B cell (primary cell): ENCODE measurements at regions of chr5 and their contacts with region 1.

Region 1: DNA sequence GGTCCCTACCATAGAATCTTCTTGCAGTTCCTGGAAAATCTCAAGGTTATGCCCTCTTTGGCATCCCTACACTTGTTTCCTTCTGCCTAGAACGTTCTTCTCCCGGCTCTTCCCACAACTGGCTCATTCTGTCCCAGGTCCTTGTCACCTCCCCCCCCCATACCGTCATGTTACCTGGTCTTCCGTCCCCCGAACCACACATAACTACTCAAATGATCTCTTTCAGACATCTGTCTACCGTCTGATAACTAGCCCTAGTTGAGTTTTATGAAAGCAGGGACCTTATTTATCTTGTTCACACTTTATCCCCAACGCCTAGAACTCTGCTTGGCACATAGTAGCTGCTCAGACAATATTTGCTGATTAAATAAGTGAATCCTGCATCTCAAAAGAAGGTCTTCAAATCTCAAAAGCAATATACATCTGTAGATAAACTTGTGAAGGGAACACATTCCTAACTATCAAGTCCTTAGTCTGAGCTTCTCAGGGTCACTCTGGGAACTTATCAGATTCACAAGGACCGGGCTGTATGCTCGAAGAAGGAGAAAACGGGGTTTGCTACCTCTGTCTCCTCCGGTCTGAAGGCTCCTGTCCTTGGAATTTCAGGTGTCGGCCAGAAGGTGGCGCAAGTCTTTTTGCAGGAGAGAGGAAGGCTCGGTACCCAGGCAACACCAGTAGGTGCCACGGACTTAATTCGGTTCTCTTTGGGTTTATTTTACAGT is 30.0 kb downstream of the LCP2 start:
- DNase-seq: peak; percentile 85
- ATAC-seq: peak; percentile 95
- H3K4me3 ChIP-seq: no peak overlapping the region
- H3K4me3 Mint-ChIP-seq: peak overlapping the region; percentile 19
- H3K27ac ChIP-seq: no peak overlapping the region
- H3K27ac Mint-ChIP-seq: no peak overlapping the region
- H3K4me1 ChIP-seq: peaks cover 13 to 17% of the 10 kb centered on the region in 2 donors
- H3K4me1 Mint-ChIP-seq: peaks cover 19% of the 10 kb centered on the region
- H3K27me3 ChIP-seq: peaks cover 0 to 5% (median 0%) of the 10 kb centered on the region in 4 experiments
- H3K27me3 Mint-ChIP-seq: peaks cover 13% of the 10 kb centered on the region
- CTCF ChIP-seq: peak; percentile 90

Region 2: GRCh38 chr5:170100066-170100943 is 167.3 kb before region 1 on chr5:
- CTCF ChIA-PET with region 1: no interaction called
- POLR2A ChIA-PET with region 1: no interaction called
- intact Hi-C with region 1: loop called (anchors 5 kb)
- DNase-seq: peak; percentile 66
- ATAC-seq: no peak
- H3K4me3 ChIP-seq: no peak overlapping the region
- H3K4me3 Mint-ChIP-seq: no peak overlapping the region
- H3K27ac ChIP-seq: no peak overlapping the region
- H3K27ac Mint-ChIP-seq: no peak overlapping the region
- H3K4me1 ChIP-seq: no peaks in the 10 kb centered on the region
- H3K4me1 Mint-ChIP-seq: no peaks in the 10 kb centered on the region
- H3K27me3 ChIP-seq: peaks cover 0 to 2% (median 0%) of the 10 kb centered on the region in 4 experiments
- H3K27me3 Mint-ChIP-seq: peaks cover 13% of the 10 kb centered on the region
- CTCF ChIP-seq: peak; percentile 71

Region 3: GRCh38 chr5:170278611-170279452 is 11.2 kb after region 1 on chr5:
- CTCF ChIA-PET with region 1: interaction called, 17 read pairs
- POLR2A ChIA-PET with region 1: no interaction called
- intact Hi-C with region 1: no loop called
- DNase-seq: peak; percentile 73
- ATAC-seq: peak; percentile 87
- H3K4me3 ChIP-seq: peak overlapping the region in 2 of 5 experiments; percentile 5 to 35
- H3K4me3 Mint-ChIP-seq: peak overlapping the region; percentile 61
- H3K27ac ChIP-seq: peak overlapping the region; percentile 15 to 49
- H3K27ac Mint-ChIP-seq: peak overlapping the region; percentile 90
- H3K4me1 ChIP-seq: peaks cover 41 to 46% of the 10 kb centered on the region in 2 donors
- H3K4me1 Mint-ChIP-seq: peaks cover 46% of the 10 kb centered on the region
- H3K27me3 ChIP-seq: no peaks in the 10 kb centered on the region
- H3K27me3 Mint-ChIP-seq: no peaks in the 10 kb centered on the region
- CTCF ChIP-seq: no peak

Region 4: DNA sequence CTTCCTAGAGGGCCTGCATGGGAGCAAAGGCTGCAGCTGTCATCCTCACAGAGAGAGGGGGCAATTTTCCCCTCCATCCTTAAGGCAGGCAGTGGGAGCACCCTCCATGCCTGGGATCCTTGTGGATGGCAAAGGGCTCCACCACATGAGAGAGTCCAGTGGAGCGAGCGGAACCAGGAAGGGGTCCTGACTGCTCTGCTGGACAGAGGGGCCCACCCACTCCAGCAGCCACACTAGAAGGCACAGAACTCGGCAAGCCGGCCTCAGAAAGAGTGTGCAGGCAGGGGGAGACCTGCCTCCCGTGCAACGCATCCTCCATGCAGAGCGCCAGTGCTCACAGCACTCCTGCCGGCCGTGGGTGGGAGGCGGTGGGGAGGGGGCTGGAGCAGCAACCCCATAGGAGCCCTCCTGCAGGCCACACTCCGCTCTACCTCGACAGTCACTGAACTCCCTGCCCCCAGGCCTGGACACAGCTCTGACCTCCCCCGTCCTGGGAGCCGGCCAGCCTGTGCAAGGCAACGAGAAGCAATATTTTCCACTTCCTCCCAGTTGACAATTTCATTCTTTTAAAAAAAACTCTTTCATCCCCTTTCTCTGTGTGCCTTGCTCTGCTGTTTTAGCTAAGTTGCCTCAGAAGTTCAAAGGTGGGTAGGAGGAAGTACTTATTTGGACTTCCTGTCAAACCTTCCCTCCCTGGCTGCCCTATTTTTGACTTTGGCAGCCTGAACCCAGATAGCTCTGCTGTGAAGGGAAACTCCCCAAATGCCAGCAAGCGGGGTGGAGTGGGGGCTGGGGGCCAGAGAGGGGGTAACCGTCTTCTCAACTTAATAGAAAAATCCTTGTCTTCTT is 35.3 kb after region 1 on chr5:
- CTCF ChIA-PET with region 1: interaction called, 99 read pairs
- POLR2A ChIA-PET with region 1: no interaction called
- intact Hi-C with region 1: loop called (anchors 5 kb)
- DNase-seq: peak; percentile 72
- ATAC-seq: peak; percentile 63
- H3K4me3 ChIP-seq: peak overlapping the region in 1 of 5 experiments; percentile 19
- H3K4me3 Mint-ChIP-seq: peak overlapping the region; percentile 56
- H3K27ac ChIP-seq: no peak overlapping the region
- H3K27ac Mint-ChIP-seq: peak overlapping the region; percentile 53
- H3K4me1 ChIP-seq: peaks cover 23 to 29% of the 10 kb centered on the region in 2 donors
- H3K4me1 Mint-ChIP-seq: peaks cover 39% of the 10 kb centered on the region
- H3K27me3 ChIP-seq: peaks cover 0 to 7% (median 0%) of the 10 kb centered on the region in 4 experiments
- H3K27me3 Mint-ChIP-seq: peaks cover 8% of the 10 kb centered on the region
- CTCF ChIP-seq: no peak

Region 5: GRCh38 chr5:170338933-170339779 is 71.6 kb after region 1 on chr5:
- CTCF ChIA-PET with region 1: interaction called, 218 read pairs
- POLR2A ChIA-PET with region 1: interaction called, 4 read pairs
- intact Hi-C with region 1: loop called (anchors 1 kb)
- DNase-seq: peak; percentile 75
- ATAC-seq: peak; percentile 95
- H3K4me3 ChIP-seq: no peak overlapping the region
- H3K4me3 Mint-ChIP-seq: no peak overlapping the region
- H3K27ac ChIP-seq: no peak overlapping the region
- H3K27ac Mint-ChIP-seq: no peak overlapping the region
- H3K4me1 ChIP-seq: peaks cover 5 to 12% of the 10 kb centered on the region in 2 donors
- H3K4me1 Mint-ChIP-seq: peaks cover 18% of the 10 kb centered on the region
- H3K27me3 ChIP-seq: no peaks in the 10 kb centered on the region
- H3K27me3 Mint-ChIP-seq: peaks cover 9% of the 10 kb centered on the region
- CTCF ChIP-seq: peak; percentile 70

Region 6: DNA sequence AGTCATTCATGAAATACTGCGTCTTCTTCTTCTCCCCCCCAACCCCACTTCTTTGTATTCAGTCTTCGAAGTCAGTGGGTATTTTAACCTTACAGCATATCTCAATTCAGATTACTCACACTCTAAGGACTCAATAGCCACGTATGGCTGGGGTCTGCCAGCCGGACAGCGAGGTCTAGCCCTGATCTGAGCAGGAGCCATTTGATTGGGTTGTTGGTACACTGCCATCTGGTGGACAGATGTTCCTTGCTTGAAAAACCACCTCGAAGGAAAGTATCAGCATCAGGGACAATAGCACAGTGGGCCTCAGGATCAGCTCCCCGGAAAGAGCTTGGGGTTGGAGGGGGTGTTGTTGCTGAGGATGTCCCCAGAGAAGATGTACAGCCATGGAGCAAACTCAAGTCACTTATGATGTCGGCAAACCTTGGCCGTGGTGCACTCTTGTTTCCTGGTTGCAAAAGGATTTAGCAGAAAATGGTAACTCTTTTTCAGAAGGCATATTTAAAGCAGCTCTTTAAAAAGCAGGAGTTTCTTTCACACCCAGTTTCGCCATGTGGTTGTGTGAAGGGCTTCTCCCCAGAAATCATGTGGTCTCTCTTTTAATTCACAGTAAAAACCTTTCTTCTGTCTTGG is 153.3 kb after region 1 on chr5:
- CTCF ChIA-PET with region 1: interaction called, 86 read pairs
- POLR2A ChIA-PET with region 1: no interaction called
- intact Hi-C with region 1: loop called (anchors 1 kb)
- DNase-seq: peak; percentile 74
- ATAC-seq: peak; percentile 41
- H3K4me3 ChIP-seq: no peak overlapping the region
- H3K4me3 Mint-ChIP-seq: no peak overlapping the region
- H3K27ac ChIP-seq: no peak overlapping the region
- H3K27ac Mint-ChIP-seq: no peak overlapping the region
- H3K4me1 ChIP-seq: no peaks in the 10 kb centered on the region
- H3K4me1 Mint-ChIP-seq: no peaks in the 10 kb centered on the region
- H3K27me3 ChIP-seq: peaks cover 0 to 16% (median 6%) of the 10 kb centered on the region in 4 experiments
- H3K27me3 Mint-ChIP-seq: peaks cover 34% of the 10 kb centered on the region
- CTCF ChIP-seq: peak; percentile 78

Region 7: DNA sequence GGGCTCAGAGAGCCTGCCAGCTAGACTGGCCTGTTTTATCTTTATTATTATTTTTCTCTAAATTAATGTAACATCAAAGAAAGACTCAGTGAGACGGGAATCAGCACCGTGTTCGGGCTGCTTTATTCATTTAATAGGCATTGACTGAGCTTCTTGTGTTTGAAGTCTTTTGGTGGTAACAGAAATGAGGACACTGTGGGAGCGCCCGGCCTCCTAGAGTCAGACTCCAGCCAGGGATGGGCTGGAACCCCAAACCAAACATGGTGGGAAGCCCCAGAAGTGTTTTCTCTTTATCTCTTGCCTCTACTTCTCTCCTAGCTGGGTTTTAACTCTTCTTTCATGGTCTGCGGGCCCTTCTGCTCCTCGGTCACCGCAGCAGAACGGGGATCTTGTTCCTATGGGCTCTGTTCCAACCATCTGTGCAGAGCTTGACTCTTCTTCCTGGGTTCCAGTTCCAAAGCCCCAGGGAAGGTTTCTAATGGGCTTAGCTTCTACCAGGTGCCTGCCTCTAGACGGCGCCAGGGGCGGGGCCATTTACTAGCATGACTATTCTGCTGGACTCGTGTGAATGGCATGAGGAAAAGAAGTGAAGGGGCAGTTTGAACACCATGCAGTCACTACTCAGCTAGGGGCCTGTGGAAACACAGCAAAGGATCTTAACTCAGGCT is 1275.7 kb after region 1 on chr5:
- CTCF ChIA-PET with region 1: no interaction called
- POLR2A ChIA-PET with region 1: no interaction called
- intact Hi-C with region 1: no loop called
- DNase-seq: no peak
- ATAC-seq: no peak
- H3K4me3 ChIP-seq: no peak overlapping the region
- H3K4me3 Mint-ChIP-seq: no peak overlapping the region
- H3K27ac ChIP-seq: no peak overlapping the region
- H3K27ac Mint-ChIP-seq: no peak overlapping the region
- H3K4me1 ChIP-seq: no peaks in the 10 kb centered on the region
- H3K4me1 Mint-ChIP-seq: no peaks in the 10 kb centered on the region
- H3K27me3 ChIP-seq: no peaks in the 10 kb centered on the region
- H3K27me3 Mint-ChIP-seq: peaks cover 18% of the 10 kb centered on the region
- CTCF ChIP-seq: no peak